B cell (primary cell): ENCODE measurements at regions of chr17 and their contacts with region 1.

Region 1: GRCh38 chr17:29568331-29569244 is at the start of gene TP53I13:
- DNase-seq: peak; percentile 92
- ATAC-seq: peak; percentile 60
- H3K4me3 ChIP-seq: peak within 1 kb of the TSS; percentile 71 to 99 (median 80)
- H3K4me3 Mint-ChIP-seq: peak within 1 kb of the TSS; percentile 99
- H3K27ac ChIP-seq: peak within 1 kb of the TSS; percentile 71 to 76
- H3K27ac Mint-ChIP-seq: peak within 1 kb of the TSS; percentile 97
- H3K4me1 ChIP-seq: peaks cover 27 to 40% of the 10 kb centered on the region in 2 donors
- H3K4me1 Mint-ChIP-seq: peaks cover 39% of the 10 kb centered on the region
- H3K27me3 ChIP-seq: no peaks in the 10 kb centered on the region
- H3K27me3 Mint-ChIP-seq: no peaks in the 10 kb centered on the region
- CTCF ChIP-seq: no peak
- total RNA-seq, gene TP53I13: 220 and 224 TPM in 2 replicates

Region 2: DNA sequence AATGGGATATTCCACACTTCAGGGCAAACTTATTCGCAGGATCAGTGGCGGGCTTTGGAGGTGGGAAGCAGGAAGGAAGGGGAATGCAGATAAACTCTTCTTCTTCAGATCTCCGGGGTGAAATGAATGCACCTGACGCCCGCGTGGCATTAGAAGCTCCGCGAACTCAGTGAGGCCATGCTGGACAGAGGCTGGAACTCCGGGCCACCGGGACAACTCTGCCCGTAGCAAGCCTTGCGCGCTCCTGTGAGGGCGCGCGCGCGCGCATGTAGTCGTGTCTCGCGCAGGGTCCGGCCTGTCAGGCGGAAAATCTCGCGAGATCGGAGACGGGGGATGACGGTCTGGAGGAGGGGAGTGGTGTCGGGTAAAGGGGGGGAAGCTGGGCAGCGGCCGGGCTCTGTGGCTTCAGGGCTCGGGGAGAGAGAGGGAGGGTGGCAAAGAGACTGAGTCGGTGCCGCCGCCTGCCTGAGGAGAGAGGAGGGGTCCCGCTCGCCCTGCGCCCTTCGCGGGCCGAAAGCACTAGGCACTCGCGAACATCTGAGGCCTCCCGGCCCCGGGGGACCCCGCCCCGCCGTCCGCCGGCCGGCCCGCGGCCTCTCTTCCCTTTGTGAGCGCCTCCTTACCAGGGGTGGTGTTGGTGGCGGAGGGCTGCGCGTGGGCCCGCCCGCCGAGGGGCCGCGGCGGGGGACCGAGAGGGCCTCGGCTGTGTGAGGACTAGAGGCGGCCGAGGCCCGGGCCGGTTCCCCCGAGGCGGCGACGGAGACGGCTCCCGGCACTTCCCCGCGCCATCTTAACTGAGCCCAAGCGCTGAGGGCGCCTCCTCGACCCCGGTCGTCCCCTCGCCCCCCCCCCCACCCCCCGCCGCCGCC is 178.4 kb before region 1 on chr17 and contains the start of gene TAOK1:
- CTCF ChIA-PET with region 1: interaction called, 3 read pairs
- POLR2A ChIA-PET with region 1: no interaction called
- intact Hi-C with region 1: loop called (anchors 1 kb)
- DNase-seq: peak; percentile 98
- ATAC-seq: peak; percentile 95
- H3K4me3 ChIP-seq: peak within 1 kb of the TSS; percentile 65 to 93 (median 76)
- H3K4me3 Mint-ChIP-seq: peak within 1 kb of the TSS; percentile 95
- H3K27ac ChIP-seq: peak within 1 kb of the TSS; percentile 64 to 96
- H3K27ac Mint-ChIP-seq: peak within 1 kb of the TSS; percentile 93
- H3K4me1 ChIP-seq: peaks cover 12 to 27% of the 10 kb centered on the region in 2 donors
- H3K4me1 Mint-ChIP-seq: peaks cover 38% of the 10 kb centered on the region
- H3K27me3 ChIP-seq: no peaks in the 10 kb centered on the region
- H3K27me3 Mint-ChIP-seq: no peaks in the 10 kb centered on the region
- CTCF ChIP-seq: no peak
- total RNA-seq, gene TAOK1: 78.8 and 80.7 TPM in 2 replicates

Region 3: DNA sequence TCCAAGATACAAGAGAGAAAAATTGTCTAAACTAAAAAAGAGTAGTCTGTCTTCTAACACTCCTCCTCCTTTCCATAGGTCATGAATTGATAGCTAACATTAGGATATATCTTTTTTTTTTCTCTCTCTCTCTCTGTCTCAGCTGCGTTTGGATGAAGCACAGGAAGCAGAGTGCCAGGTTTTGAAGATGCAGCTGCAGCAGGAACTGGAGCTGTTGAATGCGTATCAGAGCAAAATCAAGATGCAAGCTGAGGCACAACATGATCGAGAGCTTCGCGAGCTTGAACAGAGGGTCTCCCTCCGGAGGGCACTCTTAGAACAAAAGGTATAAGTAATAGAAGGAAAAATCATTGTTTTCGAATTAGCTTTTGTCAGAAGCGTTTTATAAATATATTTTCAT is 34.6 kb before region 1 on chr17:
- CTCF ChIA-PET with region 1: interaction called, 12 read pairs
- POLR2A ChIA-PET with region 1: interaction called, 4 read pairs
- intact Hi-C with region 1: no loop called
- DNase-seq: no peak
- ATAC-seq: no peak
- H3K4me3 ChIP-seq: no peak overlapping the region
- H3K4me3 Mint-ChIP-seq: no peak overlapping the region
- H3K27ac ChIP-seq: no peak overlapping the region
- H3K27ac Mint-ChIP-seq: no peak overlapping the region
- H3K4me1 ChIP-seq: no peaks in the 10 kb centered on the region
- H3K4me1 Mint-ChIP-seq: peaks cover 2% of the 10 kb centered on the region
- H3K27me3 ChIP-seq: no peaks in the 10 kb centered on the region
- H3K27me3 Mint-ChIP-seq: no peaks in the 10 kb centered on the region
- CTCF ChIP-seq: no peak

Region 4: GRCh38 chr17:29579866-29580771 is 11.5 kb after region 1 on chr17:
- CTCF ChIA-PET with region 1: interaction called, 17 read pairs
- POLR2A ChIA-PET with region 1: interaction called, 4 read pairs
- intact Hi-C with region 1: loop called (anchors 1 kb)
- DNase-seq: peak; percentile 93
- ATAC-seq: peak; percentile 96
- H3K4me3 ChIP-seq: no peak overlapping the region
- H3K4me3 Mint-ChIP-seq: no peak overlapping the region
- H3K27ac ChIP-seq: no peak overlapping the region
- H3K27ac Mint-ChIP-seq: peak overlapping the region; percentile 87
- H3K4me1 ChIP-seq: peaks cover 19 to 23% of the 10 kb centered on the region in 2 donors
- H3K4me1 Mint-ChIP-seq: peaks cover 27% of the 10 kb centered on the region
- H3K27me3 ChIP-seq: no peaks in the 10 kb centered on the region
- H3K27me3 Mint-ChIP-seq: no peaks in the 10 kb centered on the region
- CTCF ChIP-seq: peak; percentile 79

Region 5: DNA sequence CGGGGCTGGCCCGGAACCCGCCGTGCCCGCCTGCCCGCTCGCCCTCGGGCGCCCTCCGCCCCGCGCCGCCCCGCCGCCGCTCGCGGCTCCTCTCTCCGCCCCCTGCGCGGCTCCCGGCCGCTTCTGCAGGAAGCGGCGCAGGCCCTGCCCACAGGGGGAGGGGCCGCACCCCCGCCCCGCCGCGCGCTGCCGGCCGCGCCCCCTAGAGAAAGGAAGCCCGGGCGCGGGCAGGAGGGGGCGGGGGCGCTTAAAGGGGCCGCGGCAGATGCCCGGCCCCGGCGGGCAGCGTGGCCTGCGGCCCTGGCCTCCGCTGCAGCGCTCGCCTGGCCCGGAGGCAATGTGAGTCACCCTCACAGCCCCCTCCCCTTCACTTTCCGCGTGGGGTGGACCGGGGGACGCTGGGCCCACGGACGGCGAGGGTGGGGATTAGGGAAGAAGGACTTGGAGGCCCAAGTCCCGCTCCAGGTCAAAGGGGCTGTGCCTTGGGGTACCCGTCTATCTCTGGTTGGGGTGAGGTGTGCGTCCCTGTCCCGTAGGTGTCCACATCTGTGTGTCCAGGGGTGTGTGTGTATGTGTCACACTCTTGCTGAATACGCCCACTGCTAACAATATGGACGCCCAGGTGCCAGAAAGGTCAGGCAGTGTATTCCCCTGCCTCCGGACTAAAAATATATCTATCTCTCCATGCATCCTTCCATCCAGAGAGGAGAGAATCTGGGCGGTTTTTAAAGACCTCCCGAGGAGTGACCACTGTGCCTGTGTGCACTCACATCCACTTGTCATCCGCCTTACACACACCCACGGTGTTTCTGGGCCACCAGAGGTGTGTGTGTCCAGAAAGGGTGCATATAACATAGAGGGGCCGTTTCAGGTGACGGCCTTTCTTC is 21.2 kb after region 1 on chr17 and contains the start of gene GIT1:
- CTCF ChIA-PET with region 1: interaction called, 21 read pairs
- POLR2A ChIA-PET with region 1: interaction called, 6 read pairs
- intact Hi-C with region 1: loop called (anchors 1 kb)
- DNase-seq: peak; percentile 90
- ATAC-seq: peak; percentile 82
- H3K4me3 ChIP-seq: peak within 1 kb of the TSS; percentile 58 to 96 (median 69)
- H3K4me3 Mint-ChIP-seq: peak within 1 kb of the TSS; percentile 91
- H3K27ac ChIP-seq: peak within 1 kb of the TSS; percentile 46 to 51
- H3K27ac Mint-ChIP-seq: peak within 1 kb of the TSS; percentile 94
- H3K4me1 ChIP-seq: peaks cover 62 to 75% of the 10 kb centered on the region in 2 donors
- H3K4me1 Mint-ChIP-seq: peaks cover 69% of the 10 kb centered on the region
- H3K27me3 ChIP-seq: peaks cover 0 to 7% (median 2%) of the 10 kb centered on the region in 4 experiments
- H3K27me3 Mint-ChIP-seq: no peaks in the 10 kb centered on the region
- CTCF ChIP-seq: no peak
- total RNA-seq, gene GIT1: 61.9 and 66.3 TPM in 2 replicates